ENCODE measurements at regions of chr6 and their contacts with region 1.

Region 1: DNA sequence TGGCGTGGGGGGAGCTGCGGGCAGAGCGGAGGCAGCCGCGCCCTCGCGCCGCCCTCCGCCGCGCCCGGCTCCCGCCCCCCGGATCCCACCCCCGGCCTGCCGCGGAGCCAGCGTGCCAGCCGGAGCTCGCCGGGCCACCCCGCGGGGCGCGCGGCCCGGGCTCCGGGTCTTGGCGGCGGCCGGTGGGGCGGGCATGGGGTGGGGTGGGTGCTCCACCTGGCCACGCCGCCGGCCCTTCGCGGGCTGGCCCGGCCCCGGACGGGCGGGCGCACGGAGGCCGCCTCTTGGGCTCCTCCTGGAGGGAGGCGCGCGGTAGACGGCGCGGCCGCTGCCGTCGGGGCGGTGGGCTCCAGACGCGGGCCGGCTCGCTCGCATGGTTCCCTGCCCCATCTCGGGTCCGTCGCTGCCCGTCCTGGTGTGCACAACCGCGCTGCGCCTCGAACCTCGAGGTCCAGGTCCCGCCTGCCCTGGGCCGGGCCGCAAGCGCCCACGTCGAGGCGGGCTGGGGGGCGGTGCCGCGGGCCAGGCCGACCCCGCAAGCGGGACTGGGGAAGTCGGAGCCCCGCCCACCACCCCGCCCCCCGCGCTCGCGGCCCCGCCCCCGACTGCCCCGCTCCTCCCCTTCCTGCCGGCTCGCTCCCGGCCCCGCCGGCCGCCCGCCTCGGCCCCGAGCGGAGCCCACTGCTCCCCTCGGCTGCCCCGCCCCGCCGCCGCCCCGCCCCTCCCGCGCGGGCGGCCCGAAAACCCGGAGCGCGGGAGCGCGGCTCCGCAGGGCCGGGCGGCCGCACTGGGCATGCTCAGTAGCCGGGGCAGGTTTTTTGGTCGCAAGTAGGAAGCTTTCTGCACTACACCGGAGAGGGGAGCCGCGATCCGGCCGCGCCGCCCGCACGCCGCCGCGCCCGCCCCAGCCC is at the start of gene CDYL:
- DNase-seq: peak; percentile 91
- H3K4me3 Mint-ChIP-seq: peak within 1 kb of the TSS; percentile 80
- H3K27ac Mint-ChIP-seq: peak within 1 kb of the TSS; percentile 76
- H3K4me1 Mint-ChIP-seq: peaks cover 51% of the 10 kb centered on the region
- H3K27me3 Mint-ChIP-seq: peaks cover 10% of the 10 kb centered on the region
- total RNA-seq, gene CDYL: 22.4 to 24.4 TPM

Region 2: DNA sequence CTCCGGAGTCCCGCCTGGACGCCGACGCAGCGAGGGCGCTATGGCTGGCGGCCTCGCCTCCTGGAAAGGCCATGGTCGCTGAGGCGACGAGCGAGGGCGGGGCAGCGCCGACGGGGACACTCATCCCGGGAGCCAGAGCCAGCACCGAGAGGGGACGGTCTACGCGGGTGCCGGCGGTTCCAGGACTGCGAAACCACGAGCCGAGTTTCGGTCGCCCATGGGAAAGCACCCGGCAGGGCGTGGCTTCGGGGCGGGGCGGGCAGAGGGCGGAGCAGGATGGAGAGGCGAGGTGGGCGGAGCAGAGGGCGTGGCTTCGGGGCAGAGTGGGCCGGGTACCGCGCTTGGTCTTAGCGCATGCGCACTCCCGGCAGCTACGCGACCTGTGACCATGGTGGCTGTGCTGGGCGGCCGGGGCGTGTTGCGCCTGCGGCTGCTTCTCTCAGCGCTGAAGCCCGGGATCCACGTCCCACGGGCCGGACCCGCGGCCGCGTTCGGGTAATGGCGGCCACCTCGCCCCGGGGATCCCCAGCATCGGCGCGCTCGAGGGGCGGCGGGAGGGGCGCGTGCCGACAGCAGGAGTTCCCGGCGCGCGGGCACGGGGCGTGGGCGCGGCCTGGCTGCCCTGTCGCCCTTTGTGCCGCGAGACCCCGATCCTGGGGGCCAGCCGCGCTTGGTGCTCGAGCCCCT is 1657.3 kb before region 1 on chr6 and contains the start of gene BPHL:
- CTCF ChIA-PET with region 1: no interaction called
- POLR2A ChIA-PET with region 1: no interaction called
- intact Hi-C with region 1: loop called (anchors 5 kb)
- DNase-seq: peak; percentile 99
- H3K4me3 Mint-ChIP-seq: peak within 1 kb of the TSS; percentile 78
- H3K27ac Mint-ChIP-seq: peak within 1 kb of the TSS; percentile 62
- H3K4me1 Mint-ChIP-seq: peaks cover 14% of the 10 kb centered on the region
- H3K27me3 Mint-ChIP-seq: no peaks in the 10 kb centered on the region
- total RNA-seq, gene BPHL: 10.1 to 11.4 TPM

Region 3: DNA sequence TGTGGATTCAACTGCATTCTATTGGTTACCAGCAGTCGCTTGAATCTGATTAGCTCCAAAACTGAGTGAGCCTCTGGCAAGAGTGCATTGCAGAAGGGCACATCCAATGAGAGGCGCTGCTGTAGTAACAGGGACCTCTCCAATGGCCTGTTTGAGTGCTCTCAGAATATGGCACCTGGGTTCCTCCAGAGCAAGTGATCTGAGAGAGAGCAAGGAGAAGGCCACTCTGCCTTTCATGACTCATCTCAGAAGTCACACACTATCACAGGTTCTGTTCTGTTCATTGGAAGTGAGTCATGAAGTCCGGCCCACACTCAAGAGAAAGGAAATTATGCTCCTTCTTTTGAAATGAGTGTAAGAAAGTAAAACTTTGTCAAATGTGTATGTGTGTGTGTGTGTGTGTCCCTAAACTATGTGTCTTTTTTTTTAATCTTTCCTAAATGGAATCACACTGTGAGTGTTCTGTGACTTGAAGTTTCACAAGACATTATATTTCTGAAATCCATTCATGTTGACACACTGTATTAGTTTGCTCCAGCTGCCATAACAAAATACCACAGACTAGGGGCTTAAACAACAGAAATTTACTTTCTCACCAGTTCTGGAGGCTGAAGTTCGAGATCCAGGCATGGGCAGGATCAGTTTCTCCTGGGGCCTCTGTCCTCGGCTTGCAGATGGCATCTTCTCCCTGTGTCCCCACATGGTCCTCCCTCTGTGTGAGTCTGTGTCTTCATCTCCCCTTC is 138.0 kb before region 1 on chr6:
- CTCF ChIA-PET with region 1: no interaction called
- POLR2A ChIA-PET with region 1: no interaction called
- intact Hi-C with region 1: loop called (anchors 1 kb)
- DNase-seq: peak; percentile 61
- H3K4me3 Mint-ChIP-seq: no peak overlapping the region
- H3K27ac Mint-ChIP-seq: peak overlapping the region; percentile 51
- H3K4me1 Mint-ChIP-seq: peaks cover 21% of the 10 kb centered on the region
- H3K27me3 Mint-ChIP-seq: peaks cover 24% of the 10 kb centered on the region

Region 4: DNA sequence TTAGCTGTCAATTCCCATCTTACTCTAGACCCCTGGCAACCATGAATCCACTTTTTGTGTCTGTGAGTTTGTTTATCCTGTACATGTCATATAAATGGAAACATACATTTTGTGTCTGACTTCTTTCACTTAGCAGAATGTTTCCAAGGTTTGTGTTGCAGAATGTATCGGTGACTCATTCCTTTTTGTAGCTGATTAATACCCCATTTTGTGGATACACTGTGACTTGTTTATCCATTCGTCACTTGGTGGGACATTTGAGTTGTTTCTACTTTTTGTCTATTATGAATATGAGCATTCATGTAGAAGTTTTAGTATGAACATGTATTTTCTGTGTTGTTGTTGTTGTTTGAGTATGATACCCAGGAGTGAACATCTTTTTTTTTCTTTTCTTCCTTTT is 21.7 kb after region 1 on chr6:
- CTCF ChIA-PET with region 1: no interaction called
- POLR2A ChIA-PET with region 1: interaction called, 3 read pairs
- intact Hi-C with region 1: loop called (anchors 1 kb)
- DNase-seq: no peak
- H3K4me3 Mint-ChIP-seq: no peak overlapping the region
- H3K27ac Mint-ChIP-seq: no peak overlapping the region
- H3K4me1 Mint-ChIP-seq: peaks cover 40% of the 10 kb centered on the region
- H3K27me3 Mint-ChIP-seq: no peaks in the 10 kb centered on the region

Region 5: DNA sequence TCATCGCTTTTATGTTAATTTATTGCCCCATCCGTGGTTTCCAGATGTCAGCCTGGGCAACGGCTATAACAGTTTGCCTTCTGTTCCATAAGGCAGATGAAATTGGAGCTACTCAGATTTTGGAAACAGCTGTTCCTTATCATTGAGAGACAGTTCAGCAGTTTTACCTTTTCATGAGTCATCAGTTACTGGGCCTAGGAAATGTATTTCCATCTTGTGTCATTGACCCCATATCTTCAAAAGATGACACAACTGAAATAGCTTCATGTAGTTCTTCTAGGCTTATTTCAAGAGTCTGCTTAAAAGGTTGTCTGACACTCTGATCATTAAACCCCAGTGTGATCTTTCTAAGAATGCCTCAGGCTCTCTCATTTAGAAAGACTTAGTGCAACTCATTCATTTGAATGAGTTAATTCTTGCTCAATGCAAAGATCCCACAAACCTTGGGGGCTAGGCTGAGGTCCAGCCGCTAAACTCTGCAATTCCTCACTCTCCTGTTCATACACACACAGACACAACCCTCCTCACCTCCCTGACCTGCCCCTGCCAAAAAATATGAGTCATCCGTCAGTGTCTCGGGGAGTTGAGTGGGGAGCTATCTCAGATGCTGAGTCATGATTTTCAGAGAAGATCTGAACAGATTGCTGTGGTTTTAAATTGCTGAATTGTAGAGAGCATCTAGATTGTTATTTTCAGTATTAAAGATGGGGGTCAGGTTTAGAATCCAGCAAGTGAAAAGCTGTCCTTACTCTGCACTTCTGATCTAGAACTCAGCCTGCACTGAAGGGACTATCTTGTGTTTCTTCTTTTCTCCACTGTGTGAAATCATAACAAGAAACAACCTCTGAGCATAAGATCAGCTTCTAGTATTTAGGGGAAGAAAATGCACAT is 166.2 kb after region 1 on chr6:
- CTCF ChIA-PET with region 1: no interaction called
- POLR2A ChIA-PET with region 1: interaction called, 5 read pairs
- intact Hi-C with region 1: loop called (anchors 2 kb)
- DNase-seq: peak; percentile 78
- H3K4me3 Mint-ChIP-seq: no peak overlapping the region
- H3K27ac Mint-ChIP-seq: peak overlapping the region; percentile 83
- H3K4me1 Mint-ChIP-seq: peaks cover 52% of the 10 kb centered on the region
- H3K27me3 Mint-ChIP-seq: no peaks in the 10 kb centered on the region

Region 6: DNA sequence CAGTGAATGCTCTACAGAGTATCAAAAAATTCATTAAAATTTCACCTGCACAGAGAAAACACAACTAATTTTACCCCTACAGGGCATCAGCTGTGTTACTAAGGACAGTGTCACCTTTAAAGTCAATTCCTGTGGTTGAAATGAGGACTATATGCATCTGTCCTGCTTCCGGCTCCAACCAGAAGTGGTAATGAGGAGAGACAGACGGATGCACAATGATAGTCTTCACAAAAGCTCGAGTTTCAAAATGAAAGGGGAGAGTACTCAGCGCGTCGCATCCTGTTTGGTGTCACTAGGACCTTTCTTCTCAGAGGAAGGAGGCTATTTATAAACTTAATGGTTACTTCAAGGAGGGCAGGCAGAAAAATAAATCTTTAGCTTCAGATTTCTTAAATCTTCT is 398.4 kb after region 1 on chr6:
- CTCF ChIA-PET with region 1: no interaction called
- POLR2A ChIA-PET with region 1: interaction called, 3 read pairs
- intact Hi-C with region 1: loop called (anchors 1 kb)
- DNase-seq: peak; percentile 78
- H3K4me3 Mint-ChIP-seq: peak overlapping the region; percentile 27
- H3K27ac Mint-ChIP-seq: peak overlapping the region; percentile 71
- H3K4me1 Mint-ChIP-seq: peaks cover 40% of the 10 kb centered on the region
- H3K27me3 Mint-ChIP-seq: no peaks in the 10 kb centered on the region

Region 7: DNA sequence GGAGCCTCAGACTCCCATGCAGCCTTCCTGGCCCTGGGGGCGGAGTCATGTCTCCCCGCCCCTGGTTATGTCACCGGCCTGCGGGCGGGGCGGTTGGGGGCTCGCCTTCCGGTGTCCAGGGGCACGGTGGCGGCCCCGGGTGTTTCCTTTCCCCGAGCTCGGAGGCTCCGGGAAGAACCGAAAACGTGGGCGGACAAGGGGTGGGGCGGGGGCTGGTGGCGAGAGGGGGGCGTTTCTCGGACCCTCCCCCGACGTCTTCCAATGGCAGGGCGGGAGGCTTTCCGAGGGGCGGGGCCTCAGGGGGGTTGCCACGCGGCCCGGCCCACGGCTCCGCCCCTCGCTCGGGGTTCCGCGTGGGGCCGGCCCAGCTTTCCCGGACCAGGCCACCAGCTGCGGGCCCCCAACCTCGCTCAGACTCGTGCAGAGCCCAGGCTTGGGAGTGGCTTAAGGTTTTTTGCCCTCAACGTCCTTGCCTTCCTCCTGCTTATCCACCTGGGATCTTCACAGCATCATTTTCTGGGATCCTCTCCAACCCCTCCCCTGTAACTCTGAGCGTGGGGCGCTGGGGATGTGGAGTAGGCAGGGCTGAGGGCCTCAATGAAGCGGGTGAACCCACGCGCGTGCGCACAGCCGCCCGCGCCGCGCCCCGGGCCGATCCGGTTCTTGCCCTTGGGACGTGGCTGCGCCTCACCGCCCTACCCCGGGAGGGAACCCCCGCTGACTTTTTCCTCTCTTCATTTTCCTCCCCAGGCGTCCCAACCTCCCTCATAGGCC is 1233.0 kb after region 1 on chr6:
- CTCF ChIA-PET with region 1: no interaction called
- POLR2A ChIA-PET with region 1: no interaction called
- intact Hi-C with region 1: loop called (anchors 5 kb)
- DNase-seq: peak; percentile 73
- H3K4me3 Mint-ChIP-seq: peak overlapping the region; percentile 73
- H3K27ac Mint-ChIP-seq: no peak overlapping the region
- H3K4me1 Mint-ChIP-seq: peaks cover 32% of the 10 kb centered on the region
- H3K27me3 Mint-ChIP-seq: peaks cover 52% of the 10 kb centered on the region

Measured in activated CD4-positive, alpha-beta memory T cell treated with anti-CD3 and anti-CD28 coated beads for 36 hours (primary cell).